Transverse colon (tissue), 4 donors: ENCODE measurements at regions of chr1 and their contacts with region 1.

Region 1: DNA sequence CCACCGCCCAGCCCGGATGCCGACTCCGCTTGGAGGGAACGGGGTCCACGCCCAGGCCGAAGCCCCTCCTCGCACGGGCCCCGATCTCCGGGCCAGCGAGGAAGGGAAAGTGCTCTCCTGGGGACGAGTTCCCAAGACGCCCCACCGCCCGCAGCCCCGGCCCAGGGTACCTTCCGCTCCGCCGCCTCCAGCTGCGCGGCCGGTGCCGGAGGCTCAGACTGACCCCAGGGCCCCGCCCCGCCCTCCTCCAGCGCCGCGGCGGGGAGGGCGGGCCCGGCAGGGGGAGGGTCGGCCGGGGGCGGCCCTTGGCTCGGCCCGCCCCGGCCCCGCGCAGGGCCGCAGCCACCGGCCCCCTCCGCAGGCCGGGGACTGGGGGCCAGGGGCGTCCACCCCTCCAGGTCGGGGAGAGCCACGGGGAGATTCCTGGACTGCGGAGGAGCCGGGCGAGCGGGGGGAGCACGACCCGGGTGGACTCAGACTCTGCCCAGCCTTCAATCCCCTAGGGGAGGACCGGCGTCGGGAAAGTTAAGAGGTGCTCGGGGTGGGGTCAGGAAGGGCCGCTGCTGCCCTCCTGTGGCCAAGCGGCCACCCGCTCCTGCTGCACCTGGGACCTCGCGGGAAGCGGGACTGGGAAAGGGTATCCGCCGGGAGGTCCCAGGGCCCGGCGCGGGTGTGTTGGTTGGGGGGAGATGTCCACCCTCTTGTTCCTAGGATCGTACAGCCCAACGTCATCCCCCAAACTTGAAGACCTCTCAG is at the start of gene RHOC:
- DNase-seq: peak; percentile 92
- H3K4me3 ChIP-seq: peak within 1 kb of the TSS; percentile 94 to 97 (median 96)
- H3K27ac ChIP-seq: peak within 1 kb of the TSS; percentile 99 to 100 (median 99)
- H3K4me1 ChIP-seq: peaks cover 29 to 44% (median 31%) of the 10 kb centered on the region in 4 donors
- H3K27me3 ChIP-seq: no peaks in the 10 kb centered on the region
- CTCF ChIP-seq: peak; percentile 89 to 96 (median 92)
- EP300 ChIP-seq: no peak
- POLR2A ChIP-seq: peak; percentile 89
- total RNA-seq, gene RHOC: 438 to 737 (median 617) TPM

Region 2: GRCh38 chr1:112390775-112391602 is 316.1 kb before region 1 on chr1:
- in situ Hi-C with region 1: loop called (anchors 10 kb)
- intact Hi-C with region 1: loop called (anchors 5 kb)
- DNase-seq: peak; percentile 95
- H3K4me3 ChIP-seq: peak overlapping the region in 3 of 4 donors; percentile 25 to 51 (median 34)
- H3K27ac ChIP-seq: peak overlapping the region; percentile 89 to 97 (median 92)
- H3K4me1 ChIP-seq: peaks cover 9 to 48% (median 39%) of the 10 kb centered on the region in 4 donors
- H3K27me3 ChIP-seq: no peaks in the 10 kb centered on the region
- CTCF ChIP-seq: peak; percentile 87 to 99 (median 92)
- EP300 ChIP-seq: no peak
- POLR2A ChIP-seq: peak; percentile 48

Region 3: DNA sequence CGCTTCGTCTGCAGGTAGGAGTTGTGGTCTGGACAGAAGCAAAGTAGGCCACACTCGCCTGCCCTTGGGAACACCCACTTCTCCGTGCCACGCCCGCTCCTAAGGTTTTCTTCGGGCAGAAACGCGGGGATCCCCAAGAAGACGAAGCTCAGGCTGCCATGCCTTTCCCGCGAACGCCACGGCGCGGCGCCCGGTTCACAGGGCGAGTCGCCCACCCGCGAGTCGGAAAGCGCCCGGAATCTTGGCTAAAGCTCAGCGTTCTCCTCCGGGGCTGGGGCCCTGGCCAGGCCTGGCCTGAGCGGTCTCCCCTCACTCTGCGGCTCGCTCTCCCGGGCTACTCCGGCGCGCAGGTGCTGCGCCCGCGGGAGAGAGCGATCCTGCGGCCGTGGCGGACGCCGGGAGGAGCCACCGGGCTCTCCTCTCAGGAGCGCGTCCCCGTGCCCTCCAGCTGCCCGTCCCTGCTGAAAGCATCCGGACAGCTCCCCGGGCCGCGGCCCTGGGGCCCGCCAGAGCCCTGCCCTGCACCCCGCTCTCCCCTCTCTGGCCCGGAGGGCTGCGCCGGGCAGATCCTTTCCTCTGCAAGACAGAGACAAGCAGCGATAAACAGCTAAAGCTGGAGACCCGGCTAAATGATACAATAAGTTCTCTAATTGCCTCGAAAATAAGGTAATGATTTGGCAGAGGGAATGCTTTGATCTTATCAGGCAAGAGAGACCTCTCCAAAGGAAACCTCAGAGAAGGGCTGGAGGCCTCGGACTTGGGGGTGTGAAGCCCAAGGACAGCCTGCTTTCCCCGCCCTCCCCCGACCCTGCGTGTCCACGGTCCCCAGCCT is 205.1 kb before region 1 on chr1:
- in situ Hi-C with region 1: loop called in 1 of 4 experiments (anchors 5 kb)
- intact Hi-C with region 1: no loop called
- DNase-seq: peak; percentile 79
- H3K4me3 ChIP-seq: peak overlapping the region; percentile 25 to 69 (median 43)
- H3K27ac ChIP-seq: peak overlapping the region; percentile 26 to 56 (median 50)
- H3K4me1 ChIP-seq: peaks cover 4 to 14% (median 11%) of the 10 kb centered on the region in 4 donors
- H3K27me3 ChIP-seq: peaks cover 27% of the 10 kb centered on the region
- CTCF ChIP-seq: peak; percentile 61 to 83 (median 69)
- EP300 ChIP-seq: no peak
- POLR2A ChIP-seq: no peak

Region 4: DNA sequence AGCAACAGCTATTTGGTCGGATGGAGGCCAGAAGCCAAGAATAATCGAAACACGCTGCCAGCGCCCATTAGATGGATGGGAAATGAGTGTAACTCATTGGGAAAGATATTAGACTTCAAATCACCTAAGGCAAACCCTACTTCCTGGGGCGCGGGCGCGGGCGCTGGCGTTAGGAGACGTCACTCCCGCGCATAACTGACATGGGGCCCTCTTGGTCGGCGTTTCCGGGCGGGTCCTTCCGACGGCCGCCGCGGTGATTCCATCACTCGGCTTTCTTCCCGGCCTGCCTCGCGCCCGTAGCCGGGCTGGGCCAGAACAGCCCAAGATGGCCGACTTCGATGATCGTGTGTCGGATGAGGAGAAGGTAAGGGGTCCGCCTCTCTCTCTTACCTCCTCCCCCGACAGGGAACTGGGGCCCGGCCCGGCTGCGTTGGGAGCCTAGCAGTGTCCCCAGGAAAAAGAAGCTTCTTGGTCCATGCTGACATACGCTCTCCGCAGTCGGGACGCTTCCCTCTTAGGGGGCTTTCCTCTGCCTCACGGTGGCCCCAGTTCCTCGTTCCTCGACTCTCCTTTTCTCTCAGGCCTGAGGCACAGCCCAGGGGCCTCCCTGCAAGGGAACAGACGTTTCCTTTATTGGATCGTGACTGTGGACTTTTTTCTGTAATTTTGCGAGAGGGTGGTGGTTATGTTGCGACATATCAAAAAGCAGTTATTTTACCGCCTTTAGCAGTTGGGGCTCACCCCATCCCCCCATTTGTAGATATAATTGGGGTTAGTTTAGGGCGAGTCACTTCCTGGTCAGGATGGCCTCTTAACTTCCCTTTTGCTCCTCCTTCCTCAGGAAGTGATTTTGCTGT is 87.3 kb before region 1 on chr1 and contains the start of gene CAPZA1:
- in situ Hi-C with region 1: loop called in 2 of 4 experiments (anchors 10 kb)
- intact Hi-C with region 1: loop called (anchors 1 kb)
- DNase-seq: peak; percentile 95
- H3K4me3 ChIP-seq: peak within 1 kb of the TSS; percentile 81 to 98 (median 86)
- H3K27ac ChIP-seq: peak within 1 kb of the TSS; percentile 93 to 98 (median 97)
- H3K4me1 ChIP-seq: peaks cover 16 to 45% (median 35%) of the 10 kb centered on the region in 4 donors
- H3K27me3 ChIP-seq: no peaks in the 10 kb centered on the region
- CTCF ChIP-seq: no peak
- EP300 ChIP-seq: peak; percentile 1
- POLR2A ChIP-seq: peak; percentile 92
- total RNA-seq, gene CAPZA1: 44.2 to 228 (median 123) TPM

Region 5: DNA sequence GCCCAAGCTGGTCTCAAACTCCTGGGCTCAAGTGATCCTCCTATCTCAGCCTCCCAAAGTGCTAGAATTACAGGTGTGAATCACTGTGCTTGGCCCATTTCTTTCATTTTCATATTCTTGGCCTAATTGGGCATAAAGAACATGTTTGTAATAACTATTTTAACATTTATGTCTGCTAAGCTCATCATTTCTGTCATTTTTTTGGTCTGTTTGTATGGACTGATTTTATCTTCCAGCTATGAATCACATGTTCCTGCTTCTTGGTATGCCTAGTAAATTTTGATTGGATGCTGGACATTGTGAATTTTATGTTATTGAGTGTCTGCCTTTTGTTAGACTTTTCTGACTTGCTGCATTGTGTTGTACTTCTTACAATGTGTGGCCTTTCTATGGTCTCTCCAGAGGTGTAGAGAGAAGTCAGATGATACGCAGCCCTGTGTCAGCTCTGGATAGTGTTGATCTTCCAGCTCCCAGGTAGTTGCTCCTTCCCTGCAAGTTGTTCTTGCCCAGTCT is 47.1 kb after region 1 on chr1:
- in situ Hi-C with region 1: no loop called
- intact Hi-C with region 1: no loop called
- DNase-seq: no peak
- H3K4me3 ChIP-seq: no peak overlapping the region
- H3K27ac ChIP-seq: no peak overlapping the region
- H3K4me1 ChIP-seq: no peaks in the 10 kb centered on the region
- H3K27me3 ChIP-seq: peaks cover 16% of the 10 kb centered on the region
- CTCF ChIP-seq: no peak
- EP300 ChIP-seq: no peak
- POLR2A ChIP-seq: no peak

Region 6: GRCh38 chr1:113021430-113022086 is 314.5 kb after region 1 on chr1:
- in situ Hi-C with region 1: no loop called
- intact Hi-C with region 1: no loop called
- DNase-seq: no peak
- H3K4me3 ChIP-seq: no peak overlapping the region
- H3K27ac ChIP-seq: peak overlapping the region; percentile 65 to 87 (median 82)
- H3K4me1 ChIP-seq: peaks cover 3 to 34% (median 21%) of the 10 kb centered on the region in 4 donors
- H3K27me3 ChIP-seq: no peaks in the 10 kb centered on the region
- CTCF ChIP-seq: peak in 4 of 5 experiments; percentile 2 to 33 (median 10)
- EP300 ChIP-seq: no peak
- POLR2A ChIP-seq: no peak

Region 7: DNA sequence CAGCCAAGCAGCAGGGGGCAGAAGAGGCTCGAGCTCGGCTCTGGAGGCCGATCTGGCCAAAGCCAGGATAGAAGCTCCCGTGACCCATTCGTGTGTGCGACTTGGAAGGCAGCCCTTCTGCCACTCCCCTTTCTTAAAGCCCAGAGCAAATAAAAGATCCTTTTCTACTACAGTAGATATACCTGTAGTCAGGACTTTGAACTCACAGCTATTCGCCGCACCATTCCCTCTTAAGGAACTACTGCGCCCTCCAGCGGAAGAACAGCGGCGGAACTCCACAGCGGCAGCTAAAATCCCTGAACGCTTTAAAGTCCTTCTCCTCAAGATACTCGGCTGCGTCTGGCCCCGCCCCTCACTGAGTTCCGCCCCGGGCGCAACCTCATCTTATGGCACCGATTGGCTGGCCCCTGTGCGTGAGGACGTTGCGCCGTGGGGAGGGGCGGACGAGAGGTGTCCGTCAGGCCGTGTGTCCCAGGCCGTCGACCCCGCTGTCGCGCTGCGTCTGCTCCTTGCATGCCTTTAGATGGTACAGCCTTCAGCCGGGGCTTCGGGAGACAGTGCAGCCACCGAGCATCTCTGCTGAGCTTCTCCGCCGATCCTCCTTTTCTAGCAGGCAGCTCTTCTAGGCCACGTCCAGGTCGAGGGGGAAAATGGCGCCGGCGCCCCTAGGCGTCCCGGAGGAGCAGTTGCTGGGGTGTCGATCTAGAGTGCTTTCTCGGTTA is 365.8 kb after region 1 on chr1 and contains the start of gene LRIG2:
- in situ Hi-C with region 1: loop called in 1 of 4 experiments (anchors 25 kb)
- intact Hi-C with region 1: loop called (anchors 10 kb)
- DNase-seq: peak; percentile 100
- H3K4me3 ChIP-seq: peak within 1 kb of the TSS; percentile 72 to 82 (median 77)
- H3K27ac ChIP-seq: peak within 1 kb of the TSS; percentile 93 to 97 (median 96)
- H3K4me1 ChIP-seq: peaks cover 0 to 32% (median 22%) of the 10 kb centered on the region in 4 donors
- H3K27me3 ChIP-seq: no peaks in the 10 kb centered on the region
- CTCF ChIP-seq: peak in 4 of 5 experiments; percentile 76 to 95 (median 88)
- EP300 ChIP-seq: no peak
- POLR2A ChIP-seq: peak; percentile 93
- total RNA-seq, gene LRIG2: 9.4 to 43.7 (median 27.2) TPM